Psoas muscle (tissue), 8 donors: ENCODE measurements at regions of chr1 and their contacts with region 1.

Region 1: DNA sequence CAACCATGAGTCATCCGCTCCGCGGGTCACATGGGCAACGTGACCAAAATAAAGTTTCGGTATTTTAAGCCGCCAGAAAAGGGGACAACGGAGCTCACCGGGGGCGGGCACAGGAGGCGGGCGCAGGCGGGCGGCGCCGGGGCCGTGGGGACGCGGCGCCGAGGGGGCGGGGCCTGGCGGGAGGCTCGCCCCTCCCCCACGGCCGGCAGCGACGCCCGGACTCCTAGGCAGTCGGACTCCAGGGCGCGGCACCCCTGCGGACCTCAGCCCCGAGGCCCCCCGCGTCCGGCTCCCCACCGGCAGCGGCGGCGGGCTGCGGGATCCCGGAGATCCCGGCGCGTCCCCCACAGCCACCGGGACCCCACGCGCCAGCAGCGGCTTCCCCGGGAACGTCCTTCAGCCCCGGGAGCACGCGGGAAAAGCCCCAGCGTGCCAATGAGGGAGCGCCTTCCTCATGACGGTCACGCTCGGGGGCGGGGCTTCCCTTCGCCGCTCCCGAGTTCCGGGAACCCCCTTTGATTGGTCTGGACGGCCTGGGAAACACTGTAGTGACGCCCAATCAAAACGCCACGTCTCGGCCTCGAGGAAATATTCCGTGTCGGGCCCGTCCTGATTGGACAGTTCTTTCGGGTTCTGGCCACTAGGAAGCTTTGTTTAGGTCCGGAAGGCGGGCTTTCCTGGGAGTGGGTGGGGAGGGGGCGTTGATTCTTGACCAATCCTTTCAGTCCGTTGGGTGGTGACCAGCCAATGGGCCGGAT is 515 bp upstream of the CAMTA1 start:
- DNase-seq: peak; percentile 100
- ATAC-seq: peak; percentile 89 to 92 (median 91)
- H3K4me3 ChIP-seq: peak overlapping the region; percentile 79
- H3K27ac ChIP-seq: peak overlapping the region; percentile 96
- H3K4me1 ChIP-seq: peaks cover 20% of the 10 kb centered on the region
- H3K27me3 ChIP-seq: no peaks in the 10 kb centered on the region
- CTCF ChIP-seq: no peak

Region 2: DNA sequence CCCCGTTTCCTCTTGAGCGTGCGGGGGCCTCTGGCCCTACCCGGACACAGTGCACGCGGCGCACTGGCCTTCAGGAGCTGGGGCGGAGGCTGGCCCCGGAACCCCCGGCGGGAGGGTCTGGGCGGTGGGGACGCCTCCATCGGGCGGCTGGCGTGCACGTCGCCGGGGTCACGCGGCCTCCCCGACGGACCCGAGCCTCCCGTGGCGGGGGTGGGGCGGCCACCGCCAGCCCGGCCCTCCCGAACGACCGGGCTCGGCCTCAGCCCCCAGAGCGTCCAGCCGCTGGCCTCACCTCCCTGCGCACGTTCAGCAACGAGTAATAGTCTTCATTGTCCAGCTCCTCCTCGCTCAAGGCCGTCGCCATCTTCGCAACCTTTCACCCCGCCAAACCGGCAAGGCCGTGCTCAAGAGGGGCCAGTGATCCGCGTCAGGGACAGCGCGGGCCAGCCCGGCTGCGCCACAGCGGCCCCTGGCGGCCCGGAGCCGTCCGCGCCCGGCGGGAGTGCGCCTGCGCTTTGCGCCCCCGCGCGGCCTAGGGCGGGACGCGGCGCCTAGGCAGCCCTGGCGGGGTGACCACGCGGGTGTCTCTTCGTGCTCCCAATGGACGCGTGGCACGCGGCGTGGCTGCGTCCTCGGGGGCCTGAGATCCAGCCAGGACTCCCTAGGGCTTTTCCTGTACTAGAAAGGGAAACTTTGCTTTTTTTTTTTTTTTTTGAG is 83.1 kb before region 1 on chr1 and contains the start of gene DNAJC11:
- intact Hi-C with region 1: loop called in 1 of 2 experiments (anchors 5 kb)
- DNase-seq: peak; percentile 89 to 95
- ATAC-seq: peak; percentile 97 to 99 (median 98)
- H3K4me3 ChIP-seq: peak within 1 kb of the TSS; percentile 99
- H3K27ac ChIP-seq: peak within 1 kb of the TSS; percentile 89
- H3K4me1 ChIP-seq: peaks cover 21% of the 10 kb centered on the region
- H3K27me3 ChIP-seq: no peaks in the 10 kb centered on the region
- CTCF ChIP-seq: peak; percentile 98
- total RNA-seq, gene DNAJC11: 40.4 to 58.8 (median 51.1) TPM

Region 3: DNA sequence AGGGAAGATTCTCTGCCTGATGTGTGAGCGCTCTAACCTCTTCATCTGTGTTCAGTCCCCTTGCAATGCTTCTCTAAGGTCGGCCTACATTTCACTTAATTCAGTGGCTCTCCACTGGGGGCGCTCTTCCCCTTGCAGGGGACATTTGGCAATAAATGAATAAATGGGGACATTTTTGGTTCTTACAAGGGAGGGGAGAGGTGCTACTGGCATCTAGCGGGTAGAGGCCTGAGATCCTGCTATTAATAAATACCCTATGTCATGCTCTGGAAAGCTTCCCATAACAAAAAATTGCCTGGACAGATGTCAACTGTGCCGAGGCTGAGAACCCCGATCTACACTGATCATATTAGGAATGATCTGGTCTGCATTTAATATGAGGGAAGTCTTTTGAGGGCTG is 57.2 kb before region 1 on chr1:
- intact Hi-C with region 1: no loop called
- DNase-seq: peak; percentile 46 to 69
- ATAC-seq: peak; percentile 39 to 79 (median 58)
- H3K4me3 ChIP-seq: peak overlapping the region; percentile 18
- H3K27ac ChIP-seq: no peak overlapping the region
- H3K4me1 ChIP-seq: peaks cover 3% of the 10 kb centered on the region
- H3K27me3 ChIP-seq: no peaks in the 10 kb centered on the region
- CTCF ChIP-seq: peak; percentile 73

Region 4: GRCh38 chr1:6743189-6744101 is 41.3 kb before region 1 on chr1:
- intact Hi-C with region 1: loop called (anchors 5 kb)
- DNase-seq: peak; percentile 39 to 65
- ATAC-seq: peak; percentile 77 to 98 (median 94)
- H3K4me3 ChIP-seq: peak overlapping the region; percentile 17
- H3K27ac ChIP-seq: peak overlapping the region; percentile 70
- H3K4me1 ChIP-seq: peaks cover 14% of the 10 kb centered on the region
- H3K27me3 ChIP-seq: no peaks in the 10 kb centered on the region
- CTCF ChIP-seq: no peak